Dendritic cell treated with granulocyte-macrophage colony-stimulating factor and Interleukin-4, amounts not matched to agents 40 ng/mL and 50 ng/mL, for 4 days (primary cell): ENCODE measurements at regions of chr2 and their contacts with region 1.

Region 1: DNA sequence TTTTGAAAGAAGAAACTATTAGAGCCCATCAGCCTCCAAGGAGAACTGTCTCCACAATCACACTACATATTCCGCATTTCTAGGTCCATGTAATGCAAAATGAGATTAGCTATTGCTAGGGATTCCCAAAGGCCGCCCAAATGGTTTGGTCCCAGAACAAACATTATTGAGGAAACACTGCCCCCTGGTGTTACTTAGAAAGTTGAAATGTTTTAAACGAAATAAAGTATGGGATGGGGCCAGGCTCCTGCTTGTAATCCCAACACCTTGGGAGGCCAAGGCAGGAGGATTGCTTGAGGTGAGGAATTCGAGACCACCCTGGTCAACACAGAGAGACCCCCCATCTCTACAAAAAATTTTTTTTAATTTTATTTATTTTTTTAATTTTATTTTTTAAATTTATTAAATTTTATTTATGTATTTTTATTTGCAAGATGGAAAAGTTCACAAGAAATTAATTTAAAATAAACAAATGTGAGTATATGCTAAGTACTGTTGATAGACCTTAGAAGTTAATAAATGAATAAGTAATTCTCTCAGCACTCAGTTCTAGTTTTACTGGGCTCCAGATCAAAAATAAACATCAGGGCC is 5.5 kb downstream of the NHEJ1 start:
- H3K4me3 Mint-ChIP-seq: no peak overlapping the region
- H3K27ac Mint-ChIP-seq: no peak overlapping the region
- H3K4me1 Mint-ChIP-seq: peaks cover 9% of the 10 kb centered on the region
- H3K27me3 Mint-ChIP-seq: no peaks in the 10 kb centered on the region

Region 2: DNA sequence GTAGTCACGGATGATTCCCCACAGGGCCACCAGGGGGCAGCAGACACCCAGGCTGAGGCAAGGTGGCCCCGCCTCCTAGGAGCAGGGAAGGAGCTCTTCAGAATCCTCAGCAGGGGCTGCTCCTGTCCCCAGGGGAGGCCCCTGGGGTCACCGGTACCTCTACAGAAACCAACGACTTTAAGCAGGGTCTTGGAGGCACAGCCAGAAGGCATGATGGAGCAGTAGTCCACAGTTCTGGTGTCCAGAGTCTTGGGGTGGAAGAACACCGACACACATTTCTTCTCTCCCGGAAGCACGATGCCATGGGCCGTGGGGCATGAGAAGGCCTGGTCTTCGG is 125.4 kb before region 1 on chr2:
- intact Hi-C with region 1: loop called (anchors 1 kb)
- H3K4me3 Mint-ChIP-seq: no peak overlapping the region
- H3K27ac Mint-ChIP-seq: no peak overlapping the region
- H3K4me1 Mint-ChIP-seq: no peaks in the 10 kb centered on the region
- H3K27me3 Mint-ChIP-seq: peaks cover 30% of the 10 kb centered on the region

Region 3: GRCh38 chr2:219057709-219058540 is 97.2 kb before region 1 on chr2:
- intact Hi-C with region 1: loop called (anchors 1 kb)
- H3K4me3 Mint-ChIP-seq: peak overlapping the region; percentile 41
- H3K27ac Mint-ChIP-seq: no peak overlapping the region
- H3K4me1 Mint-ChIP-seq: peaks cover 28% of the 10 kb centered on the region
- H3K27me3 Mint-ChIP-seq: peaks cover 89% of the 10 kb centered on the region